CD8-positive, alpha-beta T cell (primary cell): ENCODE measurements at regions of chr6 and their contacts with region 1.

Region 1: GRCh38 chr6:27871924-27872638 is 40.1 kb downstream of the OR2B2 start:
- DNase-seq: peak; percentile 72 to 97 (median 85)
- ATAC-seq: peak; percentile 75
- H3K4me3 ChIP-seq: peak overlapping the region; percentile 54 to 67
- H3K4me3 Mint-ChIP-seq: peak overlapping the region; percentile 82
- H3K27ac ChIP-seq: peak overlapping the region; percentile 81 to 86
- H3K27ac Mint-ChIP-seq: peak overlapping the region; percentile 98
- H3K4me1 ChIP-seq: peaks cover 20% of the 10 kb centered on the region
- H3K4me1 Mint-ChIP-seq: peaks cover 36% of the 10 kb centered on the region
- H3K27me3 ChIP-seq: peaks cover 0 to 3% of the 10 kb centered on the region in 2 experiments
- H3K27me3 Mint-ChIP-seq: no peaks in the 10 kb centered on the region
- CTCF ChIP-seq: peak; percentile 48

Region 2: GRCh38 chr6:27553123-27553904 is 318.8 kb before region 1 on chr6:
- CTCF ChIA-PET with region 1: no interaction called
- POLR2A ChIA-PET with region 1: no interaction called
- intact Hi-C with region 1: no loop called
- DNase-seq: peak in 2 of 9 experiments; percentile 17 to 22
- ATAC-seq: no peak
- H3K4me3 ChIP-seq: no peak overlapping the region
- H3K4me3 Mint-ChIP-seq: no peak overlapping the region
- H3K27ac ChIP-seq: no peak overlapping the region
- H3K27ac Mint-ChIP-seq: no peak overlapping the region
- H3K4me1 ChIP-seq: peaks cover 4% of the 10 kb centered on the region
- H3K4me1 Mint-ChIP-seq: peaks cover 3% of the 10 kb centered on the region
- H3K27me3 ChIP-seq: peaks cover 51 to 55% of the 10 kb centered on the region in 2 experiments
- H3K27me3 Mint-ChIP-seq: peaks cover 70% of the 10 kb centered on the region
- CTCF ChIP-seq: no peak

Region 3: GRCh38 chr6:27825025-27825793 is 46.9 kb before region 1 on chr6:
- CTCF ChIA-PET with region 1: interaction called, 16 read pairs
- POLR2A ChIA-PET with region 1: interaction called, 746 read pairs
- intact Hi-C with region 1: no loop called
- DNase-seq: peak in 1 of 9 experiments; percentile 45
- ATAC-seq: peak; percentile 6
- H3K4me3 ChIP-seq: peak overlapping the region; percentile 55 to 76
- H3K4me3 Mint-ChIP-seq: peak overlapping the region; percentile 89
- H3K27ac ChIP-seq: peak overlapping the region; percentile 81 to 91
- H3K27ac Mint-ChIP-seq: peak overlapping the region; percentile 99
- H3K4me1 ChIP-seq: peaks cover 24% of the 10 kb centered on the region
- H3K4me1 Mint-ChIP-seq: peaks cover 32% of the 10 kb centered on the region
- H3K27me3 ChIP-seq: no peaks in the 10 kb centered on the region
- H3K27me3 Mint-ChIP-seq: no peaks in the 10 kb centered on the region
- CTCF ChIP-seq: no peak

Region 4: GRCh38 chr6:27847706-27848105 is 24.4 kb before region 1 on chr6:
- CTCF ChIA-PET with region 1: no interaction called
- POLR2A ChIA-PET with region 1: interaction called, 12 read pairs
- intact Hi-C with region 1: no loop called
- DNase-seq: no peak
- ATAC-seq: no peak
- H3K4me3 ChIP-seq: no peak overlapping the region
- H3K4me3 Mint-ChIP-seq: no peak overlapping the region
- H3K27ac ChIP-seq: no peak overlapping the region
- H3K27ac Mint-ChIP-seq: no peak overlapping the region
- H3K4me1 ChIP-seq: no peaks in the 10 kb centered on the region
- H3K4me1 Mint-ChIP-seq: no peaks in the 10 kb centered on the region
- H3K27me3 ChIP-seq: no peaks in the 10 kb centered on the region
- H3K27me3 Mint-ChIP-seq: peaks cover 1% of the 10 kb centered on the region
- CTCF ChIP-seq: no peak